ENCODE measurements at regions of chr1 and their contacts with region 1.

Region 1: GRCh38 chr1:2586154-2587070 is at the start of gene PRXL2B:
- DNase-seq: peak; percentile 99 to 100 (median 100)
- ATAC-seq: peak; percentile 93 to 96 (median 94)
- H3K4me3 ChIP-seq: peak within 1 kb of the TSS; percentile 64 to 96 (median 84)
- H3K27ac ChIP-seq: peak within 1 kb of the TSS; percentile 91 to 100 (median 98)
- H3K4me1 ChIP-seq: peaks cover 3 to 38% (median 18%) of the 10 kb centered on the region in 12 donors
- H3K27me3 ChIP-seq: no peaks in the 10 kb centered on the region
- CTCF ChIP-seq: no peak
- POLR2A ChIP-seq: peak; percentile 63 to 95
- total RNA-seq, gene PRXL2B: 5.1 to 13.9 (median 7.2) TPM

Region 2: DNA sequence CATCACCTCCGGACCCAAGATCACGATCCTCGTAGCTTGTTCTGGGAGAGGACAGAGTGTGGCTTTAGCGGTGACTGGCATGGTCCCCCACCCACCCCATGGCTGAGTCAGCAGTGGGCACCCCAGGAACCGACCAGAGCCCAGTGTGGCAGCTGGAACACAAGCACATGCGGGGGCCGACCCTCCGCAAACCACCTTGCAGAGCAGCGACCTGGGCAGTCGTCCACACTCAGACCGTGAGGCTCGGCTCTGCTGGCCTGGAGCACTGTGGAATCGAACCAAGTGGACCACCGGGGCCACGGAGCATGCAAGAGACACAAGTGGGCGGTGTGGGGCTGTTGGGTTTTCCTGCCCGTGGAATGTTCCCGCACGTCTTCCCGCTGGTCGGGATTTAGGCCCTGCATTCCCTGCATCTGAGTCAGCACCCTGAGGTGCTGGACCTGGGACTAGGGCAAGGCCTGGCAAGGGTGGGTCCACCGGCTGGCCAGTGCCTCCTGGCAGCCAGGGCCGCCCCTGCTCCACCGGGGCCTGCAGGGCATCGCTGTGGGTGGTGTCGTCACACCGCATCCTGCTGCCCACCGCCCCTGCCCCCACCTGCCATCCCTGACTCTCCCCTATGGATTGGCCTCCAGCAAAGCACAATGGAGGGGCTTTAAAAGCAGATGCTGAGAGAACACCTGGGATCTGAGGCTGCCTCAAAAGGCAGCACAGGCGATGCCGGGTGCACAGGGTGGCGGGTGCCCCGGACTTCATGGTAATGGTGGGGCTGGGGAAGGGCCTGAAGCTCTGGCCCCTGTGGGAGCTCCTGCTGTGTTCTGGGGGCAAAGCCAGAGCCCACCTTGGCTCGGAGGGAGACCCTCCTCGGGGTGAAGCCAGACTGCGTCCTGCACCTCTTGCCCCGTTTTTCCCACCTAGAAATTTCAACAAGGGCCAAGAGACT is 213.6 kb before region 1 on chr1:
- intact Hi-C with region 1: no loop called
- DNase-seq: peak in 3 of 5 donors; percentile 17 to 51 (median 19)
- ATAC-seq: no peak
- H3K4me3 ChIP-seq: no peak overlapping the region
- H3K27ac ChIP-seq: no peak overlapping the region
- H3K4me1 ChIP-seq: no peaks in the 10 kb centered on the region
- H3K27me3 ChIP-seq: no peaks in the 10 kb centered on the region
- CTCF ChIP-seq: no peak
- POLR2A ChIP-seq: no peak

Region 3: DNA sequence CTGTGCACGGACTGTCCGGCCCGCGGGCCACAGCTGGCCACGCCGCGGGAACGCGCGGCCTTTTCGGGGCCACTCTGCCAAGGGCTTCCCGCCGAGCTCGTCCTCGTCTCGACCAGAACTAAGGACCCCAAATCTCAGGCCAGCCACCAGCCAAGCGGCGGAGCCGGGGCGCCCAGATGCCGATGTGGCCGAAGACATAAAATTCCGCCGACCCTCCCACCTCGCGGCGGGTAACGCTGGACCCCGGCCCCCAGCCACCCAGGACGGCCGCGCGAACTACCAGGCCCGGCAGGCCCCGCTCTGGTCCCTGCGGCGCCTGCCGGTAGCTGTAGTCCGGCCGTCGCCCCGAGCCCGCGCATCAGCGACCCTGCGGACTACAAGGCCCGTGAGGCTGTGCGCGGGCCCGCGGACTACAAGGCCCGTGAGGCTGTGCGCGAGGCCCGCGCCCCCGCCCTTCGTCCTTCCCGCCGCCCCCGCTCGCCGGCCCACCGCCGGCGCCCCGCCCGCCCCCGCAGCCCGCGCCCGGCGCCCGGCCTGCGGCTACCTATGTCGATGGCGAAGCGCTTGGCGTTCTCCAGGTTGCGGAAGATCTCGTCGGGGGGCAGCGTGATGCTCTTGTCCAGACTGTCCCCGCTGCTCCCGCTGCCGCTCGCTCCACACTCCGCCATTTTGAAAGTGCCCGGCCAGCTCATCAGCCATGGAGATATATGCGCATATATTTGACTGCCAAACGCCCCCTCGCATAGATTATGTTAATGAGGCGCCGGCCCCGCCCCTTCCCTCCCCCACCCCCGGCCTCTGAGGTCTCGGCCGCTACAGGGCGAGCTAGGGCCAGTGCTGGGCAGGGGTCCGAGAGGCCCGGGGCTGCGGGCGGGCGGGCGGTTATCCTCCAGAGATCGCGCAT is 60.2 kb before region 1 on chr1 and contains the start of gene PANK4:
- intact Hi-C with region 1: loop called in 2 of 10 experiments (anchors 1 to 5 kb)
- DNase-seq: peak; percentile 94 to 97 (median 94)
- ATAC-seq: peak; percentile 87 to 90 (median 88)
- H3K4me3 ChIP-seq: peak within 1 kb of the TSS; percentile 72 to 97 (median 86)
- H3K27ac ChIP-seq: peak within 1 kb of the TSS; percentile 61 to 92 (median 86)
- H3K4me1 ChIP-seq: peaks cover 29 to 76% (median 68%) of the 10 kb centered on the region in 12 donors
- H3K27me3 ChIP-seq: peaks cover 0 to 31% (median 0%) of the 10 kb centered on the region in 9 donors
- CTCF ChIP-seq: peak in 3 of 12 donors; percentile 17 to 38 (median 20)
- POLR2A ChIP-seq: peak; percentile 68 to 75
- total RNA-seq, gene PANK4: 27.2 to 43.0 (median 36.6) TPM

Region 4: DNA sequence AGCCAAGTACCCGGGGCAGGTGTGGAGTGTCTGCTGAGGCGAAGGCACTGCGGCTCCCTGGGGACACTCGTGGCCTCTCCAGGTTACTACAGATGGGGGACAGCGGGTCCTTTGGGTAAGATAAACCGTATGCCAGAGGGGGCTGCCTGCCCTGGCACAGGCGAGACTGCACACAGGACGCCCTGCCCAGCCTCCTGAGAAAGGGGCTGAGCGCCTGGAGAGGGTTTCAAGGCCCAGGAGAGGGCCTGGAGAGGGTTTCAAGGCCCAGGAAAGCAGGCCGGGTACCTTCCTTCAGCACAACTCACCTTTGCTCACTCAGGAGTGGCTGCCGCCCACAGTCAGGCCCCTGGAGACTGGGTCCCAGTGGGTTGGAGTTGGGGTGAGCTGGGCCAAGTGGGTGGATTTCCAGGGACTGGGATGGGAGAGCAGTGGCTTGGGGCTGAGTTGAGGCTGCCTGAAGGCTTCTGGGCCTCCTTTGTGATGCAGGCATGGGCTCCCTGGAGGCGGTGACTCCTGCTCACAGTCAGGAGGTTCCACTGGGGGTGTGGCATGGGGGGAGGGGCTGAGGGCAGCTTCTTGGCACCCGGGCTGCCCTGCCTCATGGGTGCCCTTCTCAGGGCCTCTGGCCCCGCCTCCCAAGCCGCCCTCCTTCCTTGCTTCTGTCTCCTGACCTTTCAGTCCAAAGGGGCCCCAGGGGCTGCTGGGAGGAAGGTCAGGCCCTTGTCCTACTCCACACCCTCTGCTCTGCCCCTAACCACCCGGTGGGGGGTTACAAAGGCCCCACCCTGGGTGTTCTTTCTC is 46.3 kb after region 1 on chr1 and contains the start of gene MMEL1:
- intact Hi-C with region 1: loop called in 1 of 10 experiments (anchors 10 kb)
- DNase-seq: peak in 1 of 5 donors; percentile 55
- ATAC-seq: no peak
- H3K4me3 ChIP-seq: no peak within 1 kb of the TSS
- H3K27ac ChIP-seq: no peak within 1 kb of the TSS
- H3K4me1 ChIP-seq: peaks cover 0 to 22% (median 0%) of the 10 kb centered on the region in 12 donors
- H3K27me3 ChIP-seq: peaks cover 24 to 65% (median 36%) of the 10 kb centered on the region in 9 donors
- CTCF ChIP-seq: no peak
- POLR2A ChIP-seq: no peak
- total RNA-seq, gene MMEL1: 0.47 to 2.6 (median 1.6) TPM in 4 of 9 donors, not detected in the others

Region 5: DNA sequence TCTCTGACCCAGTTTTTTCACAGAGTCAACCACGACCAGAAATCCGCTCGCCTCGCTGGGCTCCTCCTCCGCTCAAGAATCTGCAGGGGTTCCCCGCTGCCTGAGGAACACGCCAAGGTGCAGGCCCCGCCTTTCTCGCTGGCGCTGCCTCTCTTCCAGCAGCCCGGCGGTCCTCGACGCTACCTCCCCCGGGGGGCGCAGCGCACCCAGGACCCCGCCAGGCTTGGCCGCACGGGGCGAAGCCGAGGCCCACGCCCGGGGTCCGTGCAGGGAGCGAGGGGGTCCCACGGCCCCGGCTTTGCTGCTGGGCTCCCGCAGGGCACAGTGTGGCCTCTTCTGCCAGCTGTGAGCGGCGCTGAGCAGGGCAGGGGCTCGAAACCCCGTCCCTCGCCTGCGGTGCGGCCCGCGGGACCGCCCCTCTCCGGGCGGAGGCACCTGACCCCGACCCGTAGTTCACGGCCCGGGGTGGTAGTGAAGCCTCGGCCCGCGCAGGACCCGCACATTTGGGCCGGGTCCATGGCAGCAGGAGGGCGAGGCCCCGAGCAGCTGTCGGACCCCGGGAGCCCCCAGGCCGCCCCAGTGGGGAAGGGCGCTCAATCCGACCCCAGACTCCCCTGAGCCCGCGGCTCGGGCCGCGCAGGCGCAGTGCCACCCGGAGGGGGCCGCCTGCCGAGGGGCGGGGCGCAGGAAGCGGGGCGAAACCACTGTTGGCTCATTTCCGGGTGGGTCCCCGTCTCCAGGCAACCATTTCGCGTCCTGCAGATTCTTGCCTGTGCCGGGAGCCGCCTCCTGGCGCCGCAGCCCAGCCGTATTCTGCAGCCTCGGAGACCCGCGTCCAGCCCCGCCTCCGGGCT is 56.4 kb after region 1 on chr1:
- intact Hi-C with region 1: loop called in 7 of 10 experiments (anchors 2 to 10 kb)
- DNase-seq: peak; percentile 94 to 96 (median 94)
- ATAC-seq: peak; percentile 66 to 95 (median 87)
- H3K4me3 ChIP-seq: peak overlapping the region; percentile 68 to 99 (median 85)
- H3K27ac ChIP-seq: peak overlapping the region; percentile 56 to 94 (median 88)
- H3K4me1 ChIP-seq: peaks cover 0 to 31% (median 14%) of the 10 kb centered on the region in 12 donors
- H3K27me3 ChIP-seq: no peaks in the 10 kb centered on the region
- CTCF ChIP-seq: peak in 6 of 12 donors; percentile 13 to 47 (median 27)
- POLR2A ChIP-seq: peak; percentile 8 to 88